Upper lobe of right lung (tissue), 1 donor: ENCODE measurements at regions of chr9 and their contacts with region 1.

Region 1: GRCh38 chr9:133994353-133995011 is 2.4 kb upstream of the VAV2 start:
- DNase-seq: peak; percentile 91
- ATAC-seq: peak; percentile 77
- H3K4me3 ChIP-seq: no peak overlapping the region
- H3K27ac ChIP-seq: no peak overlapping the region
- H3K4me1 ChIP-seq: peaks cover 26% of the 10 kb centered on the region
- H3K27me3 ChIP-seq: no peaks in the 10 kb centered on the region
- CTCF ChIP-seq: peak; percentile 99

Region 2: DNA sequence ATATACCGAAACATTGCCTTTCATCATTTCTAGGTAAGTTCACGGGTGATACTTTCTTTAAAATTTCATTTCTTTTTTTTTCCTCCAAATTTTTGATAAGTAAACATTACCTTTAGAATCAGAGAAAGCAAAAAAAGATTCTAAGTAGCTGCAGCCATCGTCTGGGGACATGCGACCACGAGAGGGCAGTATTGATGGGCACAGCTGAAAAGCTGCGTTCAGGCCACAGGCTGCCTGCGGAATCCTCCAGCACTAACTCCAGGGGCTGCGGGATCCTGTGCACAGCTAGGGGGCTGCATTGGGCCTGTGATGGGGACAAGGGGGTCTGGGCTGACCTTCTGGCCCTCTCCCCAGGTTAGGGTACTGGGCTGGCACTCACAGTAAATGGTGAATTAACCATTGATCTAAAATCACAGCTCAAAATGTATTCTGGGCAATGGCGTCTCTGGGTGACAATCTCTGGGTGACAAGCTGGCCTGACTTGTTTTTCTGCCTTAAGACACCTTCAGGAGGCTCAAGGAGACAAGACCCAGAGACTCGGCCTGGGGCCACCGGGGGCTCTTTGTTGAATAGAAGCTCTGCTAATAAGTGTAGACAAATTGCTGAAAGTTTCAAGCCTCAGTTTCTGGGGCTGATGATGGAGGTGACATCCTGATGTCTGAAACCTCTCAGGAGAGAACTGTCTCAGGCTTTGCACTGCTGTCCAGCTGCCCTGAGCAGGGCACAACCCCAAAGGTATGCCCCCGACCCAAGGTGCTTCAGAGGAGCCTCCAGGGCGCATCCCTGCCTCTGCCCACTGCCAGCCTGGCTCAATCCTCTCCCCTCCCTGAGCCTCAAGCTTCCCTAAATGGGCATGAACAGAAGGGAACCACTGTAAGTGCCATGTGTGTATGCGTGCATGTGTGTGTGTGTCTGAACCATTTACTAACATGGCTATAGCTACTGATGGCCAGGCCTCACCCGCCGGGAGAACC is 212.0 kb before region 1 on chr9:
- intact Hi-C with region 1: loop called (anchors 5 kb)
- DNase-seq: peak; percentile 80
- ATAC-seq: peak; percentile 71
- H3K4me3 ChIP-seq: no peak overlapping the region
- H3K27ac ChIP-seq: no peak overlapping the region
- H3K4me1 ChIP-seq: no peaks in the 10 kb centered on the region
- H3K27me3 ChIP-seq: no peaks in the 10 kb centered on the region
- CTCF ChIP-seq: peak; percentile 82

Region 3: DNA sequence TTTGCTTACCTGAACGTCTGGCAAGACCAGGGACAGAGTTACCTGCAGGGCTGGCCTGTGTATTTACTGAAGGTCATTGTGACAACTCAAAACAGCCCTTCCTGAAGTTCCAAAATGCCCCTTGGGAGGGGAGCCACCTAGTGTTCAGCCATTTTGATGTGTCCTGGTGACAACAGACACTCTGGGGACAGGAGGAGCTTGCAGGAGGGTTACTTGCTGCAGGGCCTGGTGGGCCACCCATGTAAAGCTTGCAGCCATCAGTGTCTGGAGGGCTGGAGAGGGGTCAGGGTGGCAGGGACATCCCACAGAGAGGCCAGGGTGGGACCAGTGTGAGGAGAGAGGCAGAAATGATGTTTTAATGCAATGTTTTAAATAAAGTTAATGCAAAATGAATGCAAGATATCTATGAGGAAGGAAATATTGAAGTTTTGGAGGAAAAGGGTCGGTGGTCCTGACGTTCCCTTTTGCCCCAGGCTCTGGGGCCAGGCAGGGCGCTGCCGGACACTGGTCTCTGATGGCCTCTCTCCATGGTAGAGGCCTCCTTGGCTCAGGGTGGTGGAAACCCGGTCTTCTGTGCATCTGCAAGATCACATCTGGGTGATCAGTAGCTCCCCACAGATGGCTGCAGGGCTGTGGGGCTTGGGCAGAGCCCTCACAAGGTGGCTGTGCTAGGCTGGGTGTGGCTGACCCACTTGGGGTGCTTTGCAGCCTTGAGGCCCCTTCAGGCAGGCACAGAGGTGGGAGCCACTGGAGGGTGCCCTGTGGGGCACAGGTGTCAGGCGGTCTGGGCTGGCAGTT is 223.5 kb after region 1 on chr9:
- intact Hi-C with region 1: no loop called
- DNase-seq: peak; percentile 40
- ATAC-seq: no peak
- H3K4me3 ChIP-seq: no peak overlapping the region
- H3K27ac ChIP-seq: no peak overlapping the region
- H3K4me1 ChIP-seq: peaks cover 23% of the 10 kb centered on the region
- H3K27me3 ChIP-seq: no peaks in the 10 kb centered on the region
- CTCF ChIP-seq: no peak